ENCODE measurements at regions of chr10 and their contacts with region 1.

Region 1: GRCh38 chr10:101291331-101292193 is 62.3 kb upstream of the LBX1 start:
- DNase-seq: peak; percentile 50 to 78 (median 70)
- ATAC-seq: peak in 3 of 4 donors; percentile 66 to 85 (median 77)
- H3K4me3 ChIP-seq: peak overlapping the region; percentile 46 to 84 (median 62)
- H3K27ac ChIP-seq: peak overlapping the region in 9 of 12 donors; percentile 44 to 78 (median 63)
- H3K4me1 ChIP-seq: peaks cover 0 to 25% (median 8%) of the 10 kb centered on the region in 12 donors
- H3K27me3 ChIP-seq: peaks cover 5 to 80% (median 24%) of the 10 kb centered on the region in 9 donors
- CTCF ChIP-seq: peak; percentile 49 to 75 (median 64)
- POLR2A ChIP-seq: no peak

Region 2: DNA sequence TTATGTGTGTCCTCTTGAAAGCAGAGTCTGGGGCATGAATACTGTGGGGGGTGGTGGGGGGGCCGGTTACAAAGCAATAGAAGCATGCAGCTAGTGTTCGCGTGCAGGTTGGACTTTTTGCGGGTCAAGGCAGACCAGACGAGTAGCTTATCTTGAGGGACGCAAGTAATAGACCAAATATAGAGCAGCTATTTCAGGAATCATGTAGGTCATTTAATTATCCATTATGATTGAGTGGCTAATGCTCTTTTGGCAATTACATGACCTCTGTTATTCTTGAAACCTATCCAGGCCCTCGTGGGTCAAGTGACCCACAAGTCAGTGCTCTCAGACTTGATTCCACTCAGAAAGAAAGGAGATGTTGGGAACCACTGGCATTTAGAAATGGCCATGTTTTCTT is 155.4 kb after region 1 on chr10:
- intact Hi-C with region 1: loop called in 3 of 10 experiments (anchors 5 kb)
- DNase-seq: peak in 4 of 5 donors; percentile 17 to 57 (median 41)
- ATAC-seq: peak; percentile 66 to 94 (median 84)
- H3K4me3 ChIP-seq: no peak overlapping the region
- H3K27ac ChIP-seq: peak overlapping the region in 10 of 12 donors; percentile 18 to 76 (median 55)
- H3K4me1 ChIP-seq: peaks cover 0 to 50% (median 20%) of the 10 kb centered on the region in 12 donors
- H3K27me3 ChIP-seq: no peaks in the 10 kb centered on the region
- CTCF ChIP-seq: no peak
- POLR2A ChIP-seq: no peak